Ascending aorta (tissue), 2 donors: ENCODE measurements at regions of chr2 and their contacts with region 1.

Region 1: GRCh38 chr2:179264368-179265081 is at the start of gene SESTD1:
- DNase-seq: peak in 1 of 2 donors; percentile 87
- H3K4me3 ChIP-seq: peak within 1 kb of the TSS; percentile 84 to 98
- H3K27ac ChIP-seq: peak within 1 kb of the TSS; percentile 92 to 94
- H3K4me1 ChIP-seq: peaks cover 0 to 27% of the 10 kb centered on the region in 2 donors
- H3K27me3 ChIP-seq: no peaks in the 10 kb centered on the region
- CTCF ChIP-seq: peak in 1 of 3 experiments; percentile 36
- total RNA-seq, gene SESTD1: 15.4 TPM

Region 2: GRCh38 chr2:178863856-178864620 is 400.5 kb before region 1 on chr2:
- intact Hi-C with region 1: loop called (anchors 10 kb)
- DNase-seq: peak; percentile 45 to 87
- H3K4me3 ChIP-seq: no peak overlapping the region
- H3K27ac ChIP-seq: peak overlapping the region; percentile 85 to 87
- H3K4me1 ChIP-seq: peaks cover 8 to 35% of the 10 kb centered on the region in 2 donors
- H3K27me3 ChIP-seq: no peaks in the 10 kb centered on the region
- CTCF ChIP-seq: no peak

Region 3: DNA sequence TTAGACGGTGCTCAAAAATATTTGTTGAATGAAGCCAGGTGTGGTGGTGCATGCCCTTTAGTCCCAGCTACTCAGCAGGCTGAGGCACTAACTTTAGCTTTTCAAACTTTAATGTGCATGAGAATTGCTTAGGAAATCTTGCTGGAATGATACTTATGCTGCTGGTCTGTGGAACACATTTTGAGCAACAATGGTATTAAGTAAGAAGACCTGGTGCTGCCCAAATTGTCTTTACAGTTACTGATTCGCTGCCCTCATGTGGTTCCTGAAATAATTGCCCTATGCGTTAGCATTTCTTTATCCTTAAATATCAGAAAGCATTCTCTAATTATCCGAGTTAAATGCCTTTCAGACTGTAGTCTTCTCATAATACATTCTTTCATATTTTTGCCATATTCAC is 76.1 kb after region 1 on chr2:
- intact Hi-C with region 1: loop called (anchors 5 kb)
- DNase-seq: no peak
- H3K4me3 ChIP-seq: no peak overlapping the region
- H3K27ac ChIP-seq: peak overlapping the region in 1 of 2 donors; percentile 4
- H3K4me1 ChIP-seq: peaks cover 4 to 25% of the 10 kb centered on the region in 2 donors
- H3K27me3 ChIP-seq: no peaks in the 10 kb centered on the region
- CTCF ChIP-seq: peak in 1 of 3 experiments; percentile 6

Region 4: GRCh38 chr2:179383975-179384374 is 119.5 kb after region 1 on chr2:
- intact Hi-C with region 1: no loop called
- DNase-seq: no peak
- H3K4me3 ChIP-seq: no peak overlapping the region
- H3K27ac ChIP-seq: no peak overlapping the region
- H3K4me1 ChIP-seq: no peaks in the 10 kb centered on the region
- H3K27me3 ChIP-seq: no peaks in the 10 kb centered on the region
- CTCF ChIP-seq: no peak